ENCODE measurements at regions of chr11 and their contacts with region 1.

Region 1: GRCh38 chr11:64304316-64305072 is 830 bp upstream of the ESRRA start:
- DNase-seq: peak; percentile 95
- H3K4me3 ChIP-seq: peak overlapping the region; percentile 81
- H3K27ac ChIP-seq: peak overlapping the region; percentile 96
- H3K4me1 ChIP-seq: peaks cover 32% of the 10 kb centered on the region
- CTCF ChIP-seq: peak; percentile 98

Region 2: GRCh38 chr11:64185816-64186498 is 118.5 kb before region 1 on chr11 and contains the start of gene STIP1:
- CTCF ChIA-PET with region 1: no interaction called
- POLR2A ChIA-PET with region 1: no interaction called
- intact Hi-C with region 1: loop called (anchors 5 kb)
- DNase-seq: peak; percentile 100
- H3K4me3 ChIP-seq: peak within 1 kb of the TSS; percentile 75
- H3K27ac ChIP-seq: peak within 1 kb of the TSS; percentile 59
- H3K4me1 ChIP-seq: peaks cover 30% of the 10 kb centered on the region
- CTCF ChIP-seq: 0 out of 2 replicates have a peak, but pooled peaks have one; percentile 19
- total RNA-seq, gene STIP1: 271 and 309 TPM in 2 replicates

Region 3: DNA sequence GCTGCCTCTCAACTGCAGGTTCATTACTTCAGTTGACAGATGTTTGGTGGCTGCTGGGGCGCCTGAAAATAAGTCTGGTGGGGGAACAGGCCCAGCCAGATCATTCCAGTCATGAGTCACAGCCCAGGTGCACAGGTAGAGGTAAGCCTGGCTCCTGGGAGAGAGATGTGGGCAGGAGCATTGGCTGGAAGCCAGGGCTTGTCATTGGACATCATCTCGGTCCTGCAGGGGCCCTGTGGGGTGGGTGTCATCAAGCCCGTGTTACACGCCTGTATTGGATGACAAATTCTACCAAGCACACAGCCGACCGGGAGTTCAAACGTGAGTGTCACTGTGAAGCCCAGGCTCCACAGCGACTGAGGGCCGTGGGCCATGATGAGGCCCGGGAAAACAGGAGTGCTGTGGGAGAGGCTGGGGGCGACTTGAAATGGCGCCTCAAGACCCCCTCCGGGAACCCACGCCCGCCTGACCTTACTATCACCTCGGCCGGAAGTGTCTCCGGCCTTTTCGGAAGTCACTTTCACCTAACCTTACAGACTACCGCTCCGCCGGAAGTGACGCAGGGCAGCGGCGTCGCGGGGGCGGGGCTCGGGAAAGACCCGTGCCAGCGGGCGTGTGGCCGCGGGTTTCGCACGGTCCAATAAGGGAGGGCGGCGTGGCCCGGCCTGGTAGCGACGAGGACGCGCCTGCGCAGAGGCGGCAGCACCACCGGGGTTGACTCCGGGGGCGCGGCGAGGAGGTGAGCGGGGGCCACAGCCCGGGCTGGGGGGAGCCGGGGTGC is 63.9 kb before region 1 on chr11 and contains the start of gene FKBP2:
- CTCF ChIA-PET with region 1: interaction called, 3 read pairs
- POLR2A ChIA-PET with region 1: no interaction called
- intact Hi-C with region 1: loop called (anchors 2 kb)
- DNase-seq: peak; percentile 98
- H3K4me3 ChIP-seq: peak within 1 kb of the TSS; percentile 81
- H3K27ac ChIP-seq: peak within 1 kb of the TSS; percentile 91
- H3K4me1 ChIP-seq: peaks cover 50% of the 10 kb centered on the region
- CTCF ChIP-seq: no peak
- total RNA-seq, gene FKBP2: 57.3 and 70.6 TPM in 2 replicates

Region 4: DNA sequence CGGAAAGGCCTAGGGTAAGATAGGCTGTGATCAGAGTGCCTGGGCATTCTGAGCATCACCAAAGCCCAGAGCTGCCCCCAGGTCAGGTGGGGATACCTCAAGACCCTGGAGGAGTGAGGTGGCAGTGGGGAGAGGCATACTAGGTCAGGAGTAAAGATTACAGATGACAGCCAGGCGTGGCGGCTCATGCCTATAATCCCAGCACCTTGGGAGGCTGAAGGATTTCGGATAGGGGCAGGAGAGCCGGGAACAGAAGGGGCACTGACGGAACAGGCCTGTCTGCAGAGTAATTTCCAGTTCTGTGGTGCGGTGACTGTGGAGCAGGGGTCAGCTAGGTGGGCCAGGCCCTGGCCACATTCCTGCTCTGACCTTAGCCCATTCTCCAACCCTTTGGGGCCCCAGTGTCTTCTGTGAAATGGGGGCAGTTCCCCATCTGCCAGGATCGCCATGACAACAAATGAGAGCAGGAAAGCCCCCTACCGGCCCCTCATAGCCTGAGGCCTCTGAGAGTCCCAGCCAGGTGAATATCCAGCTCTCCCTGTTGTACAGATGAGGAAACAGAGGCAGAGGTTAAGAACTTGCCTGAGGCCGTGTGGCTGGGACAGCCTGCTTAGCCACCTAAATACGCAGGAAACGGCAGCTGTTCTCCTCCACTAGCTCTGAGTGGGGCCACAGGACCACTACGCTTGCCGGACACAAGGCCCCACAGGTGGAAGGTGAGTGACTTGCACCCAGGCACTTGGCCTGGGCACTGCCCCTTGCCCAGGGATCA is 29.3 kb before region 1 on chr11:
- CTCF ChIA-PET with region 1: interaction called, 7 read pairs
- POLR2A ChIA-PET with region 1: interaction called, 10 read pairs
- intact Hi-C with region 1: loop called (anchors 1 kb)
- DNase-seq: no peak
- H3K4me3 ChIP-seq: no peak overlapping the region
- H3K27ac ChIP-seq: no peak overlapping the region
- H3K4me1 ChIP-seq: peaks cover 9% of the 10 kb centered on the region
- CTCF ChIP-seq: no peak

Region 5: DNA sequence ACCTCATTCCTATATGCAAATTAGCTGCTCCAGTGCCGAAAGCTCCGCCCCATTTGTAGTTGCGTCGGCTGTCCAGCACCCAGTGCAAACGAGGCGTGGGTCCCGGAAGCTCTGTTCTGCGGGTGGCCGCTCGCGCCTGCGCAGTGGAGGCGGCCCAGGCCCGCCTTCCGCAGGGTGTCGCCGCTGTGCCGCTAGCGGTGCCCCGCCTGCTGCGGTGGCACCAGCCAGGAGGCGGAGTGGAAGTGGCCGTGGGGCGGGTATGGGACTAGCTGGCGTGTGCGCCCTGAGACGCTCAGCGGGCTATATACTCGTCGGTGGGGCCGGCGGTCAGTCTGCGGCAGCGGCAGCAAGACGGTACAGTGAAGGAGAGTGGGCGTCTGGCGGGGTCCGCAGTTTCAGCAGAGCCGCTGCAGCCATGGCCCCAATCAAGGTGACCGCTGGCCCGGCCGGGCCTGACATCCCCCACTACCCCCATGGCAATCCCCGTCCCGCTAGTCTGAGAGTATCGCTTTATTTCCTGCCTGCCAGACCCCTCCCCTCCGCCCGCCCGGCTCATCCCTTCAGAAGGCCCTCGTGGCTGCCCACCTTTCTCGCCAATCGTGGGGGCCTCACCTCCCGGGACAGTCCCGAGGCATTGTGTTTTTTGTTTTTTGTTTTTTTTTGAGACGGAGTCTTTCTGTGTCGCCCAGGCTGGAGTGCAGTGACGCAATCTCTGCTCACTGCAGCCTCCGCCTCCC is 13.6 kb after region 1 on chr11 and contains the start of gene PRDX5:
- CTCF ChIA-PET with region 1: interaction called, 12 read pairs
- POLR2A ChIA-PET with region 1: interaction called, 11 read pairs
- intact Hi-C with region 1: loop called (anchors 1 kb)
- DNase-seq: peak; percentile 98
- H3K4me3 ChIP-seq: peak within 1 kb of the TSS; percentile 83
- H3K27ac ChIP-seq: peak within 1 kb of the TSS; percentile 88
- H3K4me1 ChIP-seq: peaks cover 29% of the 10 kb centered on the region
- CTCF ChIP-seq: peak; percentile 70
- total RNA-seq, gene PRDX5: 177 and 200 TPM in 2 replicates

Region 6: GRCh38 chr11:64485074-64485473 is 180.6 kb after region 1 on chr11:
- CTCF ChIA-PET with region 1: no interaction called
- POLR2A ChIA-PET with region 1: no interaction called
- intact Hi-C with region 1: no loop called
- DNase-seq: no peak
- H3K4me3 ChIP-seq: no peak overlapping the region
- H3K27ac ChIP-seq: no peak overlapping the region
- H3K4me1 ChIP-seq: no peaks in the 10 kb centered on the region
- CTCF ChIP-seq: no peak

Measured in OCI-LY7 (cell line).